Activated CD8-positive, alpha-beta T cell treated with anti-CD3 and anti-CD28 coated beads for 36 hours (primary cell): ENCODE measurements at regions of chr2 and their contacts with region 1.

Region 1: GRCh38 chr2:239326831-239327535 is 73.8 kb downstream of the HDAC4 start:
- DNase-seq: peak; percentile 93
- ATAC-seq: peak; percentile 79
- H3K4me3 Mint-ChIP-seq: peak overlapping the region; percentile 7
- H3K27ac Mint-ChIP-seq: peak overlapping the region; percentile 83
- H3K4me1 Mint-ChIP-seq: peaks cover 72% of the 10 kb centered on the region
- H3K27me3 Mint-ChIP-seq: no peaks in the 10 kb centered on the region
- CTCF ChIP-seq: no peak

Region 2: DNA sequence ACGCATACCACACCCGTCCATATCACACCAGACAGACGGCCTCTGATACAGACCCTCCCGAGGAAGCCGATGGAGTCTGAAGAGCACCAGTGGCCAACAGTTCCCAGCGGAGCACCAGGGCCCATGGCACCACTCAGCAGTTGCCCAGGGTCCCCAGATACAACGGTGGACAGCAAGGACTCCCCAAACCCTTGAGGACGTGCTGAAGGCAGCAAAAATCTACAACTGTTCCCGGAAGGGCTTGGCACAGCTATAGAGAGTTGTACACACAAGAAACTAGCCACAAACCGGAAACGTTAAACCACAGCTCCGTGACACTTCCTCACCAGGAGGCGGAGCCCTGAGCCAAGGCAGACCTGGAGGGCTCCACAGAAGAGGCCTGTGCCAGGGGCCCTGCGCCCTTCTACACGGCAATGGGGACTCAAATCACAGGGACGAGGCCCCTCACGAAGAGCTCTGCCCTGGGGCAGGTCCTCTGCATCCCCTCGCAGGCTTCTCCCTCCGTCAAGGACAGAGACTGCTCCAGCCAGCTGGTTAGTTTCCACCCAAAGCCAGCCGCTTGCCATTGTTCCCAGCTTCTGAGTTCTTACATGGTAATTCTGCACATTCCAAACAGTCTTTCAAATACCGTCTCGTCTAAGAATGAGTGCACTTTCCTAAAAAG is 59.6 kb before region 1 on chr2:
- CTCF ChIA-PET with region 1: interaction called, 12 read pairs
- POLR2A ChIA-PET with region 1: interaction called, 3 read pairs
- intact Hi-C with region 1: no loop called
- DNase-seq: peak; percentile 98
- ATAC-seq: peak; percentile 75
- H3K4me3 Mint-ChIP-seq: peak overlapping the region; percentile 79
- H3K27ac Mint-ChIP-seq: peak overlapping the region; percentile 94
- H3K4me1 Mint-ChIP-seq: peaks cover 65% of the 10 kb centered on the region
- H3K27me3 Mint-ChIP-seq: peaks cover 6% of the 10 kb centered on the region
- CTCF ChIP-seq: no peak

Region 3: GRCh38 chr2:239288951-239289511 is 38.0 kb before region 1 on chr2:
- CTCF ChIA-PET with region 1: interaction called, 9 read pairs
- POLR2A ChIA-PET with region 1: interaction called, 5 read pairs
- intact Hi-C with region 1: loop called (anchors 5 kb)
- DNase-seq: peak; percentile 77
- ATAC-seq: peak; percentile 58
- H3K4me3 Mint-ChIP-seq: peak overlapping the region; percentile 59
- H3K27ac Mint-ChIP-seq: peak overlapping the region; percentile 94
- H3K4me1 Mint-ChIP-seq: peaks cover 74% of the 10 kb centered on the region
- H3K27me3 Mint-ChIP-seq: peaks cover 1% of the 10 kb centered on the region
- CTCF ChIP-seq: no peak

Region 4: GRCh38 chr2:239369631-239370161 is 42.7 kb after region 1 on chr2:
- CTCF ChIA-PET with region 1: interaction called, 3 read pairs
- POLR2A ChIA-PET with region 1: interaction called, 3 read pairs
- intact Hi-C with region 1: loop called (anchors 10 kb)
- DNase-seq: peak; percentile 92
- ATAC-seq: peak; percentile 97
- H3K4me3 Mint-ChIP-seq: peak overlapping the region; percentile 58
- H3K27ac Mint-ChIP-seq: peak overlapping the region; percentile 89
- H3K4me1 Mint-ChIP-seq: peaks cover 13% of the 10 kb centered on the region
- H3K27me3 Mint-ChIP-seq: no peaks in the 10 kb centered on the region
- CTCF ChIP-seq: no peak

Region 5: GRCh38 chr2:239380831-239381708 is 54.1 kb after region 1 on chr2:
- CTCF ChIA-PET with region 1: interaction called, 9 read pairs
- POLR2A ChIA-PET with region 1: interaction called, 10 read pairs
- intact Hi-C with region 1: loop called (anchors 10 kb)
- DNase-seq: peak; percentile 77
- ATAC-seq: peak; percentile 86
- H3K4me3 Mint-ChIP-seq: peak overlapping the region; percentile 63
- H3K27ac Mint-ChIP-seq: peak overlapping the region; percentile 82
- H3K4me1 Mint-ChIP-seq: peaks cover 26% of the 10 kb centered on the region
- H3K27me3 Mint-ChIP-seq: no peaks in the 10 kb centered on the region
- CTCF ChIP-seq: no peak

Region 6: GRCh38 chr2:239519089-239519920 is 192.3 kb after region 1 on chr2:
- CTCF ChIA-PET with region 1: no interaction called
- POLR2A ChIA-PET with region 1: no interaction called
- intact Hi-C with region 1: no loop called
- DNase-seq: no peak
- ATAC-seq: no peak
- H3K4me3 Mint-ChIP-seq: no peak overlapping the region
- H3K27ac Mint-ChIP-seq: no peak overlapping the region
- H3K4me1 Mint-ChIP-seq: no peaks in the 10 kb centered on the region
- H3K27me3 Mint-ChIP-seq: peaks cover 3% of the 10 kb centered on the region
- CTCF ChIP-seq: no peak